CD8-positive, alpha-beta memory T cell (primary cell): ENCODE measurements at regions of chr4 and their contacts with region 1.

Region 1: DNA sequence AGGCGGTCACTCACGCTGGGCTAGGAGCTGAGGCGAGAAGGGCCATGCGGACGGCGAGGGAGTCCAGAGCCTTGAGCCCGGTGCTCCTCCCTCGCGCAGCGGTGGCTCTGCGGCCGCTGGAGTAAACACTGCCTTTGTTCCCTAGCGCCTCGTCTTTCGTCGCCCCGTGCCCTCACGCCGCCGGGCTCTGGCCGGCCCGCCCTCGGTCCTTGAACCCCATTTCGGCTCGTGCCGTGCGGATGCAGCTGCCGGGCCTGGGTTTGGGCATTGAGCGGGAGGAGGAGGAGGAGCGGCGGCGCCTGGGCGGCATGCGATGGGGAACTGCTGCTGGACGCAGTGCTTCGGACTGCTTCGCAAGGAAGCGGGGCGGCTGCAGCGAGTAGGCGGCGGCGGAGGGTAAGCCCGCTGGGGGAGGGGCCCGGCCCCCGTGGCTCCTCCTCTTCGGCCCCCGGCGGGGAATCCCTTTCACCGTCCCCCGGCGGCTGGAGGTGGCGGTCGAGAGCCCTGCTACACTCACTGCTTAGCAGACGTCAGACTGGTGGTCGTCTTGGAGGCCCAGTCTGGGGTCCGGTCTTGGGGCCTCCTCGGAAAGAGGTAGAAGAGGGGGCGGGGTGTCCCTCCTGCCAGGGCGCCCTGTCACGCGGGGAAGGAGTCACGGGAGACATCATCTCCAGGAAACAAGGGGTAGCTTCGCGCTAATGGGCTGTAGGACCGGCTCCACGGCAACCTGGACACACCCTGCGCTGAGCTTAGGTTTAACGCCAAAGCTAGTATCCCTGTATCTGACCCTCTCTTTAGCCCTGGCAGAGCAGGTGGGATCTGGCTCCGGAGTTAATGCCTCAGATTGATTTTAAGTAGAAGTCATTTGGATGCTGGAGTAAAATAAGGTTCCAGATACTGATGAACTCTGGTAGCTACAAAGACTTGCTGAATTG is at the start of gene AP1AR:
- DNase-seq: peak; percentile 75 to 86 (median 80)
- H3K4me3 ChIP-seq: peak within 1 kb of the TSS; percentile 87
- H3K4me3 Mint-ChIP-seq: peak within 1 kb of the TSS; percentile 93 to 100 (median 98)
- H3K27ac ChIP-seq: peak within 1 kb of the TSS; percentile 97
- H3K27ac Mint-ChIP-seq: peak within 1 kb of the TSS; percentile 98 to 100 (median 100)
- H3K4me1 ChIP-seq: peaks cover 21% of the 10 kb centered on the region
- H3K4me1 Mint-ChIP-seq: peaks cover 26 to 53% (median 40%) of the 10 kb centered on the region in 3 donors
- H3K27me3 ChIP-seq: no peaks in the 10 kb centered on the region
- H3K27me3 Mint-ChIP-seq: peaks cover under 1 to 5% of the 10 kb centered on the region in 2 donors
- total RNA-seq, gene AP1AR: 23.2 to 27.1 TPM

Region 2: GRCh38 chr4:112099701-112100297 is 132.2 kb before region 1 on chr4:
- CTCF ChIA-PET with region 1: interaction called, 23 read pairs
- POLR2A ChIA-PET with region 1: no interaction called
- DNase-seq: peak in 2 of 5 donors; percentile 18 to 50
- H3K4me3 ChIP-seq: no peak overlapping the region
- H3K4me3 Mint-ChIP-seq: no peak overlapping the region
- H3K27ac ChIP-seq: no peak overlapping the region
- H3K27ac Mint-ChIP-seq: no peak overlapping the region
- H3K4me1 ChIP-seq: no peaks in the 10 kb centered on the region
- H3K4me1 Mint-ChIP-seq: no peaks in the 10 kb centered on the region
- H3K27me3 ChIP-seq: no peaks in the 10 kb centered on the region
- H3K27me3 Mint-ChIP-seq: peaks cover 0 to 10% of the 10 kb centered on the region in 2 donors

Region 3: DNA sequence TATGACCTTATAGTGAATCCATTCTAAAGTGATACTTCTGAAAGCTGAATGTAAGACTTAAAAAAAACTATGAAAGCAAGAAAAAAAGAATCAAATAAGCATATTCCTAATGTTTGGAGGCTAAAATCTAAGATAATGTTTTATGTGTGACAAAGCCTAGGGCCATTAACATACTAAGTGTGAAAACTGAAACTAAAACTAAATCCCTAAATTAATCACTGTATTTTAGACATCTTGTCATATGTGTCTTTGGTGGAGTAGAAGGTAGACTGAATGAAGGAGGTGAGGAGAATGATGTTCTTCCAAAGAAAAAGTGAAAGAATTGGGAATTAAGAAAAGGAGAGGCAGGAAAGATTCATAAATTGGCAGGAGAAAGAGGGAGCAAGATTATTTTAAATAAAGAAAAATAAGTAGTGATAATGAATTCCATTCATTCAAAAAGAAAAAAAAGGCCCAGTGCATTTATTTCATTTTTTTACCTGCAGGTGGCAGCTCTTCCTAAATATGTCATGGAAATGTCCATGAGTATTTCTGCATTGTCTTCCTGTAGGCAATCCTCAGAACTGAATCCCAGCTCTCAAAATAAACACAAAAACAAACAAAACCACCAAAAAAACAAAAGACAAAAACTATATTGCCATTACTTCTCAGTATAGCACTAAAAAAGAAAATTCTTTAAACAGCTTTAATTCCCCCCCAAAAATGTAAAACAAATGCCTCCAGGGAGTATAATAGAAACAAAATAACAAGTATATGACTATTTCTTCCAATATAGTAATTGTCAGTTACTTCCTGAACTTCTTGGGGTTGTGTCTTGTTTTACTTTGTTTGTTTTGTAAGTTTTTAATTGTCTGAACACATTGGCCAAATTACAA is 17.4 kb before region 1 on chr4:
- CTCF ChIA-PET with region 1: interaction called, 11 read pairs
- POLR2A ChIA-PET with region 1: no interaction called
- DNase-seq: no peak
- H3K4me3 ChIP-seq: no peak overlapping the region
- H3K4me3 Mint-ChIP-seq: no peak overlapping the region
- H3K27ac ChIP-seq: no peak overlapping the region
- H3K27ac Mint-ChIP-seq: no peak overlapping the region
- H3K4me1 ChIP-seq: no peaks in the 10 kb centered on the region
- H3K4me1 Mint-ChIP-seq: peaks cover 0 to 4% (median 0%) of the 10 kb centered on the region in 3 donors
- H3K27me3 ChIP-seq: no peaks in the 10 kb centered on the region
- H3K27me3 Mint-ChIP-seq: peaks cover 0 to 2% of the 10 kb centered on the region in 2 donors

Region 4: DNA sequence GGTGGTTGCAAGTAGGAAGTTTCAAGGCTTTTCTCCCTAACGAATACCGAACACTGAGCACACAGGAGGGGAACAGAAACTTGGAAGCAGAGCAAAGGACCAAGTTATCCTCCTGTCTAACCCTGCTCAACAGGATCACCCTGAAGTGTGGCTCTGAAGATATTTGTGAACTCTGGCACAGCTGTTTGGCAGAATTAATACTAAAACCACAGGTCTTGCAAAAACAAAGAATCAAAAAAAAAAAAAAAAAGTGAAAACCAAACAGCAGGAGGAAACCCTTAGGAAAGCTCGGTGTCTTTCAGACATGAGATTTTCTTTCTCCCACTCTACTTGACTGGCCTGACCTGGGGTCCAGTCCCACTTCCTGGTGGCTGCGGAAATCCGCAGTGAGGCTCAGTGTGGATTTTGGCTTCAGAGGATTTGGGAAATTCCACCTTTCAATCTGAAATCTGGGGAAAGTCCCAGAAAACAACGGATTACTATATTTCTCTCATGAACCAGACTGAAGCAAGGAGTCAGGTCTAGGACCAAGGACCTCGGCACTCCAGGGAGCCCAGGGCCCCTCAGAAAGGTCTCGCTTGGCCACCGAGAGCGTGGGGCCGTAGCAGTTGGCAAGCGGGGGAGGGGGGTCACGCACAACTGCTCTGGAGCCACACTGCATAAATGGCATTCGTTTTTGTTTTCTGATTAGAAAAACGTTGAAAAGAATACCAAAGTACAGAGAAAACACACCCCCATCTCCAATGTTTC is 52.8 kb after region 1 on chr4:
- CTCF ChIA-PET with region 1: interaction called, 9 read pairs
- POLR2A ChIA-PET with region 1: interaction called, 12 read pairs
- DNase-seq: peak in 1 of 5 donors; percentile 45
- H3K4me3 ChIP-seq: peak overlapping the region; percentile 95
- H3K4me3 Mint-ChIP-seq: peak overlapping the region; percentile 82 to 98 (median 95)
- H3K27ac ChIP-seq: peak overlapping the region; percentile 85
- H3K27ac Mint-ChIP-seq: peak overlapping the region; percentile 91 to 98 (median 94)
- H3K4me1 ChIP-seq: peaks cover 50% of the 10 kb centered on the region
- H3K4me1 Mint-ChIP-seq: peaks cover 82 to 90% (median 84%) of the 10 kb centered on the region in 3 donors
- H3K27me3 ChIP-seq: no peaks in the 10 kb centered on the region
- H3K27me3 Mint-ChIP-seq: no peaks in the 10 kb centered on the region